Activated CD4-positive, alpha-beta memory T cell treated with anti-CD3 and anti-CD28 coated beads for 36 hours (primary cell): ENCODE measurements at regions of chr2 and their contacts with region 1.

Region 1: GRCh38 chr2:37672104-37672869 is 845 bp upstream of the CDC42EP3 start:
- DNase-seq: peak; percentile 78
- H3K4me3 Mint-ChIP-seq: peak overlapping the region; percentile 95
- H3K27ac Mint-ChIP-seq: peak overlapping the region; percentile 80
- H3K4me1 Mint-ChIP-seq: peaks cover 39% of the 10 kb centered on the region
- H3K27me3 Mint-ChIP-seq: no peaks in the 10 kb centered on the region

Region 2: DNA sequence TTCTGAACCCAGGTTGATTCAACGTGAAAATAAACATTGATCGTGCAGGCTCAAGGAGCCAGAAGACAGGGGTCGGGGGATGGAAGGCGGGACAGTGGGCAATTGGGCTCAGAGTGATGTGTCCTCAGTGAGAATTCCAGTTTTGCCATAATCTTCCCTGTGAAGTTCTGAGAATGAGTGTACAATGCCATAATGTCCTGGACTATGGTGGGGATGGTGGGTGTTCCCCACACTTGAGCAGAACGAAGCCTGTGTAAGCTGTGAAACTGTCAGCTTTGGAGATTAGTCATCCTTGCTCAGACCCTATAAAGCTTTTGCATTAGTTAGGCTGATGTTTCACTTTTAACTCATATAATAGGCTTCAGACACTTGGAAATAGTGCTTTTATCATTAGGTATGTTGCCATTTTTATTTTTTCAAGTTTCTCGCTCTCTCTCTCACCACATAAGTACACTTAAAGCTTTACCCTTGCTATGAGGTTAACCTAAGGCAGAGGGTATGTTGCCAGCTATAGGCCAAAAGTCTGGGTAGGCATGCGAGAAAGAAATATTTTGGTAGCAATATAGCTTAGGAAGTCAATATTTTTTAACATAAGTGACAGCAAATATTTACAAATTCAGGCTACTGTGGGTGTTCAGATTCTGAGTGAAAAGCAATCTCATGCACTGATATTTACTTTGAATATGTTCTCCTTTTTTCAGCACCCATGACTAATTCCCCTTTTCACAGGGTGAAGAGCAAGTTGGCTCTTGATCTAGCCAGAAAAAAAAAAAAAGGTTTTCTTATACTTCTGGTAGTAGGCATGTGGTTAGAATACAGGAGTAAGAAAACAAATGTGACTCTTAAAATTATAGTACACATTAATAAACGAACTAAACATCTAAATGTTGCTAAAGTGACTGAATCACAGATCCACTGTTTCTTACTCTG is 48.1 kb before region 1 on chr2:
- CTCF ChIA-PET with region 1: no interaction called
- POLR2A ChIA-PET with region 1: interaction called, 10 read pairs
- intact Hi-C with region 1: loop called (anchors 1 kb)
- DNase-seq: peak; percentile 50
- H3K4me3 Mint-ChIP-seq: peak overlapping the region; percentile 45
- H3K27ac Mint-ChIP-seq: peak overlapping the region; percentile 83
- H3K4me1 Mint-ChIP-seq: peaks cover 80% of the 10 kb centered on the region
- H3K27me3 Mint-ChIP-seq: no peaks in the 10 kb centered on the region

Region 3: GRCh38 chr2:37648331-37649011 is 23.8 kb before region 1 on chr2:
- CTCF ChIA-PET with region 1: interaction called, 5 read pairs
- POLR2A ChIA-PET with region 1: interaction called, 12 read pairs
- intact Hi-C with region 1: loop called (anchors 2 kb)
- DNase-seq: peak; percentile 74
- H3K4me3 Mint-ChIP-seq: peak overlapping the region; percentile 30
- H3K27ac Mint-ChIP-seq: peak overlapping the region; percentile 94
- H3K4me1 Mint-ChIP-seq: peaks cover 93% of the 10 kb centered on the region
- H3K27me3 Mint-ChIP-seq: no peaks in the 10 kb centered on the region

Region 4: GRCh38 chr2:37653805-37654378 is 18.4 kb before region 1 on chr2:
- CTCF ChIA-PET with region 1: interaction called, 5 read pairs
- POLR2A ChIA-PET with region 1: interaction called, 13 read pairs
- intact Hi-C with region 1: loop called (anchors 2 kb)
- DNase-seq: peak; percentile 63
- H3K4me3 Mint-ChIP-seq: peak overlapping the region; percentile 28
- H3K27ac Mint-ChIP-seq: peak overlapping the region; percentile 83
- H3K4me1 Mint-ChIP-seq: peaks cover 94% of the 10 kb centered on the region
- H3K27me3 Mint-ChIP-seq: no peaks in the 10 kb centered on the region

Region 5: DNA sequence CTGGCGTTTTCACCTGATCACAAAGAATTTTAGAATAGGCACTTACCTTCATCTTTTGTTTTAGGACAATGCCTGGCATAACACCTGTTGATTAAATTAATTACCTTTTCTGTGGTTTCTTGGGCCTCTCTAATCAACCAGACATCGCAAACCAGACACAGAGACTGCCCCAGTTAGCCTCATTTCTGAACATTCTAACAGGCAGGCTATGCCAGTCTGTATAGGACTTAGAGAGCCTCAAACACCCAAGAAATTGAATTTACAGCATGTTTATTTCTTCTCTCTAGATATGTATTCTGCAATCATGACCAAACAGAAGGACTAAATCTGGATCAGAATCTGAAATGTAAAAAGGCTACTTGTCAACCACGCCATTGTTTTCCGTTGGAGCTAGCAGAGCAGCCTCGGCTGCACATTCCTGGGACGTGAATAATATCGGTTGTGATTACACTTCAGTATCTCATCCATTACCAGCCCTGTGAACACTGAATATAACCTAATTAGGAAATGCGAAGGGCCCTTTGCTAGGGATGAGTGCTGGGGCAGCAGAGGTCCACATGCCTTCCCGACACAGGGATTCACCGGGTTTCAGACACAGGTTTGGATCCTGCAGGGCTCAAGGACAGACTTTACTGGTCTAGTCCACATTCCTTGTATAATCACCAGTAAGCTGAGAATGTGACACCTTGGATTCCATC is 16.6 kb after region 1 on chr2:
- CTCF ChIA-PET with region 1: no interaction called
- POLR2A ChIA-PET with region 1: interaction called, 4 read pairs
- intact Hi-C with region 1: loop called (anchors 1 kb)
- DNase-seq: no peak
- H3K4me3 Mint-ChIP-seq: no peak overlapping the region
- H3K27ac Mint-ChIP-seq: no peak overlapping the region
- H3K4me1 Mint-ChIP-seq: peaks cover 23% of the 10 kb centered on the region
- H3K27me3 Mint-ChIP-seq: no peaks in the 10 kb centered on the region

Region 6: DNA sequence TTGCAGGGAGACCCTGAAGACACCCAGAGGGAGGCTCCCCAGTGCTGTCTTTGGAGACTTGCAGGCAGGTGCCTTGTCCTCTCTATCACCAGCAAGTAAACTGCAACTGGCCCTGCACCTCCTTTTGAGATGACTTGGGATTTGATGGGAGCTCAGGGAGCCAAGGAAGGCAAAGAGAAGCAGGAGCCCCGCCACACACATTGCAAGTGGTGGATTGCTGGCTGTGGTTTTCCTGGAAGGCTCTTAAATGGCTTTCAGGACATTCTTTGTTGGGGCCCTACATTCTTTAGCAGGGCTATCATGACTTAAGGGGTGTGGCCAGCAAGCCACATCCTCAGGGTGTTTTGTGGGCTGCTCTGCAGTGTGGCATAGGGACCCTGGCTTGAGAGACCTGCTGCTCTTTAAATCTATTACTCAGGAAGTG is 39.0 kb after region 1 on chr2:
- CTCF ChIA-PET with region 1: interaction called, 4 read pairs
- POLR2A ChIA-PET with region 1: interaction called, 4 read pairs
- intact Hi-C with region 1: loop called (anchors 5 kb)
- DNase-seq: peak; percentile 53
- H3K4me3 Mint-ChIP-seq: no peak overlapping the region
- H3K27ac Mint-ChIP-seq: peak overlapping the region; percentile 44
- H3K4me1 Mint-ChIP-seq: peaks cover 40% of the 10 kb centered on the region
- H3K27me3 Mint-ChIP-seq: no peaks in the 10 kb centered on the region